Ovary (tissue), 10 donors: ENCODE measurements at regions of chr6 and their contacts with region 1.

Region 1: DNA sequence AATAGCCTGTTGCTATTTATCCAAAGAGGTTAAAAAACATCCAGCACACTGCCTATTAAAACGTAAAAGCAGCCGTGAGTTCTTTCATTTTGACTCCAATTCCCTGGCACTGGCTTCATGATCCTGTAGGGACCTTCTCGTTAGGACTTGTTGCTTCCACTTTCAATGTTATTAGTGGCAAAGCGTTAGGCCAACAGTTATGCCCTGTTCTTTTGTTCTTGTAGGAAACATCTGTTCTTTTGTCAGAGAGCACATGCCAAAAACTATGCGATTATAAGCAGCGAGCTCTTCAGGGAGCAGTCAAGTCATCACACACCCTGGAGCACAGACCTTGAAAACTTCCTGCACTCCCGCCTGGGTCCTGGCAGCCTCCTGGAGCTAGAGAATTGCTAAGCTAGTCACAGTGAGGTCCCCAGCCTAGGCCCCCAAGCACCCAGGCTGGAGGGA is 609.5 kb upstream of the ARID1B start:
- DNase-seq: peak; percentile 35 to 64 (median 53)
- H3K4me3 ChIP-seq: peak overlapping the region; percentile 24
- H3K27ac ChIP-seq: peak overlapping the region; percentile 63 to 74
- H3K4me1 ChIP-seq: peaks cover 8% of the 10 kb centered on the region
- H3K27me3 ChIP-seq: no peaks in the 10 kb centered on the region
- CTCF ChIP-seq: no peak
- EP300 ChIP-seq: no peak
- POLR2A ChIP-seq: no peak

Region 2: GRCh38 chr6:156579564-156579963 is 411.9 kb after region 1 on chr6:
- intact Hi-C with region 1: loop called in 1 of 4 experiments (anchors 10 kb)
- DNase-seq: no peak
- H3K4me3 ChIP-seq: no peak overlapping the region
- H3K27ac ChIP-seq: no peak overlapping the region
- H3K4me1 ChIP-seq: no peaks in the 10 kb centered on the region
- H3K27me3 ChIP-seq: no peaks in the 10 kb centered on the region
- CTCF ChIP-seq: no peak
- EP300 ChIP-seq: no peak
- POLR2A ChIP-seq: no peak

Region 3: GRCh38 chr6:157203312-157203744 is 1035.7 kb after region 1 on chr6:
- intact Hi-C with region 1: loop called in 1 of 4 experiments (anchors 5 kb)
- DNase-seq: no peak
- H3K4me3 ChIP-seq: no peak overlapping the region
- H3K27ac ChIP-seq: no peak overlapping the region
- H3K4me1 ChIP-seq: peaks cover 6% of the 10 kb centered on the region
- H3K27me3 ChIP-seq: no peaks in the 10 kb centered on the region
- CTCF ChIP-seq: no peak
- EP300 ChIP-seq: no peak
- POLR2A ChIP-seq: no peak